ENCODE measurements at regions of chr3 and their contacts with region 1.

Region 1: DNA sequence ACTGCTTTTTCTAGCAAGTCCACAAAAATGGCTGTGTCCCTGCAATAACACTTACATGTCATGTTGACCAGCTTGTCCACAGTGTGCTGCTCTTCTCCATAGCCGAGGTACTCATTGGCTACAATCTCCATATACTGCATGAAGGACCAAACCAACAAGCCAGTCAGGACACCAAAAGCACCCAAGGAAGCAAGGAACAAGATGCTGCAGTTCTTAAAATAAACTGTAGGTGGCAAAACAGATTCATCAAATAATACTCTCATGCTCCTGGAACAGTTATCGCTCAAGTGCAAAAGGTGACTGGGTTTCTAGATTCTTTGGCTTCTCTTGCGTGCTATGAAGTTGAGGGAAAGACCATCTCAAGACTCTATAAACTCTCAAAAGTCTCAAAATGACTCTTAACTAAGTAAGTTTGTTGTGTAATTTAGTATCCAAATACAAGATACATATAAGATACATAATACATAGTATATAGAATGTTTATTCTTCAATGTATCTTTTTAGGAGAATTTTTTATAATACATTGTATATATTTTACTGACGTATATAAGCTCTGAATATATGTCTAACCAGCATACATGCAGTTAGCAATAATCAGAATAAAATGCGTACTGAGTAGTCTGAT is 57.0 kb downstream of the NEK10 start:
- DNase-seq: peak in 4 of 42 donors; percentile 4 to 44 (median 21)

Region 2: GRCh38 chr3:27423463-27423862 is 111.3 kb after region 1 on chr3:
- intact Hi-C with region 1: no loop called
- DNase-seq: no peak

Region 3: GRCh38 chr3:27681245-27681748 is 369.1 kb after region 1 on chr3:
- intact Hi-C with region 1: loop called (anchors 10 kb)
- DNase-seq: peak in 9 of 42 donors; percentile 14 to 51 (median 26)